Astrocyte of the cerebellum (primary cell): ENCODE measurements at regions of chr12 and their contacts with region 1.

Region 1: DNA sequence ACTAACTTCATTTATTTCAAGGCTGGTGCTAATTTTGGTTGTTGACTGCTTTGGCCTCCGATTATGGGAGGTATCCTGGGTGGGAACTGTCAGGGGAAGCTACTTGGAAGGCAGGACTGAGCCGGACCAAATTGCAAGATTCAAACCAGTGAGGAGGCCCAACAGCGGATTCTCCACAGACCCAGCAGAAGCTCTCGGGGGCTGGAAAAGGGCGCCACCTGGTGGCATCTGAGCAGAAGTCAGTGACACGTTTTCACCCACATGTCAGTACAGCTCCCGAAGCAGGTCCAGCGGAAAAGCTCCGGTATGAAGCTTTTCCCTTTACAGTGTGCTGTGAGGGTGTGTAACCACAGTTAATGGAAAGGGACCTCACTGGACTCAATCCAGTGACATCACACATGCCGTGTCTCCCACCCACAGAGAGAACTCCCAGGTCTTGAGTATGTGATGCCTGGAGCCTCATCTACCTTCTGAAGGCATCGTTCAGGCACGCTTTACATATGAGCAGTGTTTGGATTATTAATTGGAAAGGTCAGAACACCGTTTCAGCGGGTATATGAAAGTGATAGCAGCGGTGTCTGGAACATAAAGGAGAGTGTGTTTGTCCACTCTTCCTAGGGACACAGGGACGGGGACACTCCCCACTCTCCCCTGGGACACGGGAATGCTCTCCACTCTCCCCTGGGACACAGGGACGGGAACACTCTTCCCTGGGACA is 3.6 kb upstream of the P2RX2 start:
- DNase-seq: peak; percentile 65
- H3K4me3 ChIP-seq: no peak overlapping the region
- CTCF ChIP-seq: peak; percentile 89

Region 2: DNA sequence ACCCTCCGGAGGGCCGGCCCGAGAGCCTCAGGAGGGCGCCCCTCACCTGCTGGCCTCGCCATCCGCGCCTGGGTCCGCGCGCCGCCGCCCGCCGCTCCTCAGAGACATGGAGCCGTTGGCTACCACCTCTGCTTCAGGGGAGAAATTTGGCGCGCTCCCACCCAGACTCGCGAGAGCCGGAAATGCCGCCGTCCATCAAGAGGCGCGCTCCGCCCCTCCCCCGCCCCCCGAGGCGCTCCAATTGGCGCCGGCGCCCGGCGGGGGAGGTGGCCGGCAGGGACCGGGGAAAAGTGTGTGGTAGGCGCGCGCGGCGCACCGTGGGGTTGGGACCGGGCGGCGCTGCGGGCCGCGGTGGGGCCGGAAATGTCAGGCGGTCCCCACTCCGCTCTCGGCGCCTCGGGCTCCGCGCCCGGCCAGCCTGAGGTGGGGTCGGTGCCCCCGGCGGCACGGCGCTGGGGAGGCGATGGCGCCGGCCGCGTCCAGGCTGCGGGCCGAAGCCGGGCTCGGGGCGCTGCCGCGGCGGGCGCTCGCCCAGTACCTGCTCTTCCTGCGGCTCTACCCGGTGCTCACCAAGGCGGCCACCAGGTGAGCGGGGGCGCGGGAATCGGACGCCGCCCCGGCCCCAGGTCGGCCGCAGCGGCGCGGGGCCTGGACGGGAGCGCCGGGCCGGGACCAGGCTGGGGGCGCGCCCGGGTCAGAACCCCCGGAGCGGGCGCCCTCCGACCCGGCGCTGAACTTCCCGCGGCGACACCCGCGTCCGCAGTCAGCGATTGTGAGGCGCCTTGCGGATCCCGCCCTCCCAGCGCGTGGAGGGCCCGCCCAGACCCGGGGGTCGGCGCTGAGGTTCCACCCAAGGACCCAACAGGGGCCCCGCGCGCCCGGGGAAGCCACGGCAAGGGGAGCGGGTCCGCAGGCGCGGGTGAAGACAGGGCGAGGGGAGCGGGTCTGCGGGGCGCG is 72.5 kb after region 1 on chr12 and contains the starts of genes POLE and PXMP2:
- in situ Hi-C with region 1: loop called (anchors 5 kb)
- DNase-seq: peak; percentile 87
- H3K4me3 ChIP-seq: peak within 1 kb of the TSS; percentile 63
- CTCF ChIP-seq: no peak